Breast epithelium (tissue), 4 donors: ENCODE measurements at regions of chr9 and their contacts with region 1.

Region 1: DNA sequence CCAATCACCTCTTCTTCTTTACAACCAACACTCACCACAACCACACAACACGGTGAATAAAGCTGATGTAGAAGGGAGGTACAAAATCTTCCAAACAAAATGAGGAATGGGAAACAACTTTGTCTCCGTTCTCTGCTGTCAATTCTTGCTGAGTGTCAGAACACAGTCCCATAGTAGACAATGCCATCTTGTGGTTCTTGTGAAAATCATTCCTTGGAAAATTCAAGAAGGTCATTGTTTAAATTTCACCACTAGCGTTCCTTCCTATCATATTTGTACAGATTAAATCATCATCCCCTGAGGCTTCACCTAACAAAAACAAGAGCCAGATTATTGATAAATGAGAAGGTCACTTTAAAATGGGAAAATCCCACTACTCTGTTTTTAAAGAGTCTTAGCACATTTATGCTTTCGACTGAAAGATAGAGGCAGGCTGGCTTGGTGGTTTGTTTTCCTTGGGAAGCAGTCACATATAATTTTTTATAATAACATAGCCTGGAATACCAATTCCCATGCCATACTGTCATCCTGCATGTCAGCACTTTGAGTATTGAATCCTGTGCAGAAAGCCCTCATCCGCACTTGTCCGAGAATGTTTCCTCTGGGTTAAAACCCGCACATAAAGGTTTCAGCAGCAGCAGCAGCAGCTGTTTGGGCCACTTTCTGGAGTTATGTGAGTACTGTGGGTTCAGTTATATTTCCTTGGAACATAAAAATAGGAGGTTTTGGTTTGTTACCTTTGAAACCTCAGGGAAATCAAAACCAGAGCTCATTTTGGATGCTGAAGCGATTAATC is 395.0 kb upstream of the SMARCA2 start:
- DNase-seq: no peak
- H3K4me3 ChIP-seq: no peak overlapping the region
- H3K27ac ChIP-seq: no peak overlapping the region
- H3K4me1 ChIP-seq: no peaks in the 10 kb centered on the region
- H3K27me3 ChIP-seq: no peaks in the 10 kb centered on the region
- CTCF ChIP-seq: no peak
- POLR2A ChIP-seq: no peak

Region 2: DNA sequence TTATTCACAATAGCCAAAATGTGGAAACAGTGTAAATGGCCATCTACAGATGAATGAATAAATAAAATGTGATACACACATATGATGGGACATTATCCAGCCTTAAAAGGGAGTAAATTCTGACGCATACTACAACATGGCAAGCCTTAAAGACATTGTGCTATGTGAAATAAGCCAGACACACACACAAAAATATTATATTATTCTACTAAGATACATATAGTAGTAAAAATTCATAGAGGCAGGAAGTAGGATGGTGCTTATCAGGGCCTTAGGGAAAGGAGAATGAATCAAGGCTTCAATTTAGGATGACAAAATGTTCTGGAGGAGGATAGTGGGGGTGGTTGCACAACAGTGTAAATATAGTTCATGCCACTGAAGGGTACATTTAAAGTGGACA is 48.3 kb after region 1 on chr9:
- intact Hi-C with region 1: no loop called
- DNase-seq: no peak
- H3K4me3 ChIP-seq: no peak overlapping the region
- H3K27ac ChIP-seq: no peak overlapping the region
- H3K4me1 ChIP-seq: no peaks in the 10 kb centered on the region
- H3K27me3 ChIP-seq: no peaks in the 10 kb centered on the region
- CTCF ChIP-seq: no peak
- POLR2A ChIP-seq: no peak

Region 3: GRCh38 chr9:1837449-1838084 is 217.5 kb after region 1 on chr9:
- intact Hi-C with region 1: loop called (anchors 2 kb)
- DNase-seq: peak in 1 of 2 donors; percentile 18
- H3K4me3 ChIP-seq: no peak overlapping the region
- H3K27ac ChIP-seq: no peak overlapping the region
- H3K4me1 ChIP-seq: no peaks in the 10 kb centered on the region
- H3K27me3 ChIP-seq: no peaks in the 10 kb centered on the region
- CTCF ChIP-seq: peak in 1 of 3 donors; percentile 22
- POLR2A ChIP-seq: no peak